ENCODE measurements at regions of chr4 and their contacts with region 1.

Region 1: GRCh38 chr4:182093935-182094334 is 149.3 kb upstream of the TENM3 start:
- DNase-seq: no peak

Region 2: DNA sequence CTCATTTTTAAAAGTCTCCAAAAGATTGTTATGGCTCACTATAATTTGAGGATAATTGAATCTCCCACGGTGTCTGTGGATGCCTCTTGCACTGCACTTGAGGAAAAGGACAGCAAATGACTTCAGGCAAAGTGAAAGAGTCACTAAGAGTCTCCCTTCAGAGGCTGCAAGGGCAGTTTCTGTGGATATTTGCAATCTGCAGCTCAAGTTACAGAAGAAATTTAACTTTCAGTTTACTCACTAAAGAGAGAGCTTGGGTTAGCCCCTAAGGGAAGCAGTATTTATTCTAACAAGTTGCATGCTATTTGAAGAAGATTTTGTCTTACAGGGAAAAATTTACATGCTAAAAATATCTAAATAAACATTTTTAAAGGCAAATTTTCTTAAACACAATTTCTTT is 762.7 kb before region 1 on chr4:
- intact Hi-C with region 1: no loop called
- DNase-seq: no peak

Region 3: DNA sequence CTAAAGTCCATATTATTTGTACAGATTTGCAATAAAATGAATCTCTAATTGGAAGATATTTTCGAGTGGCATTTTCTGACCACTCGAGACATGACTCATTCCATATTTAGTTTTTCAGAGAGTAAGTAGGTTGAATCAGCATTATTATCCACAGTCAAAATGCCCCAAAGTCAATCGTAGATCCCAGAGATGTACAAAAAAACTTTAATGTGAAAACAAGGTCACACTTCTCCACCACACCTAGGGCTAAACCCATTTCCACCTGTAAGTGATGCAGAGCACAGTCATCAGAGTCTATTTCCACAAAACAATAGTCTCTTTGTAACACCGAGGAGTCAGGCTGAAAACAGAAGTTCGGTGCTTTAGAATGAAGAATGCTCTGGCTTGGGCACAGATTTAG is 32.2 kb after region 1 on chr4:
- intact Hi-C with region 1: loop called in 1 of 2 experiments (anchors 1 kb)
- DNase-seq: no peak

Measured in posterior vena cava (tissue), 2 donors.